Activated B cell treated with CpG ODN at 0.5 μM for 24 hours (primary cell): ENCODE measurements at regions of chr14 and their contacts with region 1.

Region 1: GRCh38 chr14:75340921-75341320 is 62.3 kb downstream of the FOS start:
- DNase-seq: no peak
- ATAC-seq: no peak
- H3K4me3 Mint-ChIP-seq: no peak overlapping the region
- H3K27ac Mint-ChIP-seq: no peak overlapping the region
- H3K4me1 Mint-ChIP-seq: peaks cover 25% of the 10 kb centered on the region
- H3K27me3 Mint-ChIP-seq: no peaks in the 10 kb centered on the region
- CTCF ChIP-seq: no peak

Region 2: GRCh38 chr14:75409316-75410205 is 68.6 kb after region 1 on chr14:
- CTCF ChIA-PET with region 1: no interaction called
- POLR2A ChIA-PET with region 1: no interaction called
- intact Hi-C with region 1: loop called (anchors 5 kb)
- DNase-seq: no peak
- ATAC-seq: no peak
- H3K4me3 Mint-ChIP-seq: no peak overlapping the region
- H3K27ac Mint-ChIP-seq: no peak overlapping the region
- H3K4me1 Mint-ChIP-seq: no peaks in the 10 kb centered on the region
- H3K27me3 Mint-ChIP-seq: no peaks in the 10 kb centered on the region
- CTCF ChIP-seq: no peak

Region 3: GRCh38 chr14:76034566-76034965 is 693.6 kb after region 1 on chr14:
- CTCF ChIA-PET with region 1: no interaction called
- POLR2A ChIA-PET with region 1: no interaction called
- intact Hi-C with region 1: no loop called
- DNase-seq: no peak
- ATAC-seq: no peak
- H3K4me3 Mint-ChIP-seq: no peak overlapping the region
- H3K27ac Mint-ChIP-seq: no peak overlapping the region
- H3K4me1 Mint-ChIP-seq: no peaks in the 10 kb centered on the region
- H3K27me3 Mint-ChIP-seq: no peaks in the 10 kb centered on the region
- CTCF ChIP-seq: no peak